ENCODE measurements at regions of chr5 and their contacts with region 1.

Region 1: DNA sequence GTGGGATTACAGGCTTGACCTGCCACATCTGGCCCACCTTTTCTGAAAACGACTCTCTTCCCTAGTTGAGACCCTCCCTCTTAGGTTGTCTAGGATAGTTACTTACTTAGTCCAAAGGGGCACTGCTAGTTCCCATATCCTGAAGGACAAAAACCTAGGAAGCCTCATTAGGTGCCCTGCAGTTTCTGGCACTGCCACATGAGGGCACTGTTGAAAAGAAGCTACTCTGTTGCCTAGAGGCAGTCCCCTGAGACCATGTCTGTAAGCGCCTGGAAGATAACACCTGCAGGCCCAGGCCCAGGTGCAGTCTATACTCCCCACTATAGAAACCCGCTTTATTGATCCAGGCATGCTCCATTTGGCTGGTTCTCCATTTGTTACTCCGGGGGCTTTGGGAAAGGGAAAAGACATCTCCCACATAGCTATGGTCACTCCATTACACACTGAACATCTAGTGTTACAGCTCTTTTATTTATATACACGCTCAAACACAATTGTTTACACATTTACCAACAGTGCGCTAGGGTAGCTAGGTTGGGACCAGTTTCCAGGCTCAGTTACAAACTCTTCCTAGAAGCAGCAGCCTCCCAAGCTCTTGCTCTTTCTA is 73.4 kb upstream of the PPARGC1B start:
- DNase-seq: peak; percentile 74
- ATAC-seq: peak; percentile 53

Region 2: DNA sequence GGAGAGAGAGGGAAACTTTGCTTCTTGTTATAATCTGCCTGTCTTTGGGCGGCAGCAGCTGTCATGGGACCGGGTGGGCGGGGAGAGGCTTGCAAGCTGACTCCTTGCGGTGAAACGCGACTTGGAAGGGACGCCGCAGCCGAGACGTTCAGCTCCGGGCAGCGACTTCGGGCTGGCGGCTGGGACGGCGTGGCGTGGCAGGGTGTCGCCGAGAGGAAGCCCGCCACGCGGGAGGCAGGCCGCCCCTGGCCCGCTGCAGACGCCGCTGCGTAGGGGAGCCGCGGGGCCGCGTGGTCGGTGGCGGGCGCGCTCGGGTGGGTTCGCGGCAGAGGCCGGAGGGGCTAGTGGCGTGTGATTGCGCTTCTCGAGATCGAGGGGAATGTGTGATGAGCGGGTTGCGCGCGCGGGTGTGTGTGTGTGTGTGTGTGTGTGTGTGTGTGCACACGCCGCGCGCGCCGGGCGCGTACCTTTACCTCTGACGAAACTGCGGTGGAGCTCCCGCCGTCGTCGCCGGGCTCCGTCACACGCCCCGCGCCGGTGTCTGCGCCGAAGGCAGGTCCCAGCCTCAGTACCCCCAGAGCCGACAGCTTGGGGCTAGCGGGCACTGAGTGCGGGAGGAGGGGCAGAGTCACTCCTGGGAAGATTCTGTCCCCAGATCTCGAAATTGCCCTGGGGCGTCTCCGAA is 75.1 kb after region 1 on chr5:
- intact Hi-C with region 1: loop called (anchors 5 kb)
- DNase-seq: peak; percentile 92
- ATAC-seq: peak; percentile 79

Region 3: DNA sequence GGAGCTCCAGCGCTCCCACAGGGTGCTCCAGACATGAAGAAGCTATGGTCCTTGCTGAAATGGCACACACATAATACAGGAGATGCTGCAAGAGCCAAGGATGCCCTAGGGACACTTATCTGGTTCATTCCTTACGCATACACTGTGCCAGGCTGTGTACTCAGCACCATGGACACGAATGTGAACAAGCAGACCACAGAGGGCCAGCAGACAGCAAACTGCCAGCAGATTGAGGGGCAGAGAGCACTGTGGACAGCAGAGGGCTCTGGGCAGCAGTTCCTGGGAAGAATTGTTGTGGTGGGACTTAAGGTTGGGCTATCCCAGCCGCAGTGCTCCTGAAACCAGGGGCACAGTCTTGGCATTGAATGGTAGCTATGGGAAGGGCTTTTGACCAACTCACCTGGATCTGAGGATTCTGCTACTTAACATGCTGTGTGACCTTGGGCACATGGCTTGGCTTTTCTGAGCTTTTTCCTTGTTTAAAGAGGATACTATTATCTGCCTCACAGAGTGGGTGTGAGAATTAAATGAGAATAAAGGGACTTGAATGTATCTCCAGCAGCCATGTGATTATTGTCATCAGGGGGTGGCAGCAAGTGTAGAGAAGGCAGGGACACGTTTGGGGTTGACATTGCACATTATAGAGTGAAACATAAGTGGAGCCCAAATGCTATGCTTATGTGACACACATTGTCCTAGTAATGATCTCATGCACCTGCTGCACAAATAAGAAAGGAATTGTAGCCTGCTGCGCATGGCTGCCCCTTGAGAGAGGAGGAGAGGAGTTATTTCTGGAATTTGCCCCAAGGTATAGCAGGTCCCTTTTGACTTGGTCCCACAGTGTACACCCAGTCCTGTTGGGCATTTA is 103.5 kb after region 1 on chr5:
- intact Hi-C with region 1: no loop called
- DNase-seq: no peak
- ATAC-seq: peak; percentile 67

Region 4: GRCh38 chr5:149775785-149776184 is 119.1 kb after region 1 on chr5:
- intact Hi-C with region 1: no loop called
- DNase-seq: no peak
- ATAC-seq: no peak

Region 5: GRCh38 chr5:150009671-150010387 is 353.1 kb after region 1 on chr5:
- intact Hi-C with region 1: no loop called
- DNase-seq: no peak
- ATAC-seq: peak; percentile 31